Spleen (tissue), 13 donors: ENCODE measurements at regions of chr18 and their contacts with region 1.

Region 1: DNA sequence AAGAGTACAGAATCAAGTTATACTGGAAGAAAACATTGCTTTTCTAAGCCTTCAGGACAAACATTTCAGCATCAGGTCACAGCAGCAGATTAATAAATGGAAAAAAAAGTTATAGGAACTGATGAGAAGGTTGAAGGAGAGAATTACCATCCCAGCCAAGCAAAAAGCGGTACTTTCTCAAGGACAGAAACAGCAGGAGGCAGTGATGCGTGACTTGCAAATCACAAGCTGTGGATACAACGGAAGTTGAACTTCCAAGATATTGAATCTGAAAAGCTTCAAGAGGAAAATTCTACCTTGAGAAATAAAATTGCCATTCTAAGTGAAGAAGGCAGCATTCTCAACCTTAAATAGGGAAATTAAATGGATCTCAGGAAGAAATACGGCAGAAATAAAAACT is 18.5 kb upstream of the SERPINB12 start:
- DNase-seq: no peak
- H3K4me3 ChIP-seq: no peak overlapping the region
- H3K27ac ChIP-seq: no peak overlapping the region
- H3K4me1 ChIP-seq: peaks cover 0 to under 1% (median 0%) of the 10 kb centered on the region in 6 donors
- H3K27me3 ChIP-seq: peaks cover 0 to 5% (median 0%) of the 10 kb centered on the region in 7 donors
- CTCF ChIP-seq: no peak
- POLR2A ChIP-seq: no peak

Region 2: GRCh38 chr18:63476666-63477065 is 47.0 kb before region 1 on chr18 and contains the start of gene SERPINB5:
- intact Hi-C with region 1: no loop called
- DNase-seq: no peak
- H3K4me3 ChIP-seq: no peak within 1 kb of the TSS
- H3K27ac ChIP-seq: no peak within 1 kb of the TSS
- H3K4me1 ChIP-seq: no peaks in the 10 kb centered on the region
- H3K27me3 ChIP-seq: peaks cover 0 to 18% (median 0%) of the 10 kb centered on the region in 7 donors
- CTCF ChIP-seq: no peak
- POLR2A ChIP-seq: no peak
- total RNA-seq, gene SERPINB5: not detected

Region 3: DNA sequence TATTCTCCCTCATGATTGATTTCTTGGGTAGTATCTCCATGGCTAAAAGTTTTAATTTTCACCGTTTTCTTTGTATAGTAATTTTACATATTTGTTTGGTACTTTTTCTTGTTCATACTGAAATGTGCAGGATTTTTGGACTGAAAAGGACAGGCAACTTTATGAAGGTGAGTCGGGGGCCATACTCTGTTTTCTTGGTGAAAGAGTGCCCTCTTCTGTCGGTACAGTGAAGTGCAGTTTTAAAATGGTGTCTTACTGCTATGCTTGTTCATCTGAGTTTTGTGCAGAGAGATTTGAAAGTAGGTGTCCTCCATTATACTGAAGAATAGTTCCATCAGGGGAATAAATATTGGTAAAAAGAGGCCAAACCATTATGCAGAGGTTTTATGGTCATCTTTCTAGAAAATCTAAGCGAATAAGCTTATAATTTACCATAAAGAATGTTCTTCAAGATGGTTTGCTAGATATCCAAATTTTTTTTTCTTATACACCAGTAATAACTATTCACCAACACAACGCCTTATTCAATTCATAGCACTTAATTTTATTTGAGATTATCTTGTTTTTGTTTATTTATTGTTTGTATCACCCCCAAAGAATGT is 54.8 kb after region 1 on chr18:
- intact Hi-C with region 1: loop called (anchors 5 kb)
- DNase-seq: no peak
- H3K4me3 ChIP-seq: no peak overlapping the region
- H3K27ac ChIP-seq: no peak overlapping the region
- H3K4me1 ChIP-seq: peaks cover 0 to 3% (median 0%) of the 10 kb centered on the region in 6 donors
- H3K27me3 ChIP-seq: peaks cover 0 to 4% (median 0%) of the 10 kb centered on the region in 7 donors
- CTCF ChIP-seq: peak in 9 of 11 experiments; percentile 18 to 69 (median 55)
- POLR2A ChIP-seq: no peak

Region 4: DNA sequence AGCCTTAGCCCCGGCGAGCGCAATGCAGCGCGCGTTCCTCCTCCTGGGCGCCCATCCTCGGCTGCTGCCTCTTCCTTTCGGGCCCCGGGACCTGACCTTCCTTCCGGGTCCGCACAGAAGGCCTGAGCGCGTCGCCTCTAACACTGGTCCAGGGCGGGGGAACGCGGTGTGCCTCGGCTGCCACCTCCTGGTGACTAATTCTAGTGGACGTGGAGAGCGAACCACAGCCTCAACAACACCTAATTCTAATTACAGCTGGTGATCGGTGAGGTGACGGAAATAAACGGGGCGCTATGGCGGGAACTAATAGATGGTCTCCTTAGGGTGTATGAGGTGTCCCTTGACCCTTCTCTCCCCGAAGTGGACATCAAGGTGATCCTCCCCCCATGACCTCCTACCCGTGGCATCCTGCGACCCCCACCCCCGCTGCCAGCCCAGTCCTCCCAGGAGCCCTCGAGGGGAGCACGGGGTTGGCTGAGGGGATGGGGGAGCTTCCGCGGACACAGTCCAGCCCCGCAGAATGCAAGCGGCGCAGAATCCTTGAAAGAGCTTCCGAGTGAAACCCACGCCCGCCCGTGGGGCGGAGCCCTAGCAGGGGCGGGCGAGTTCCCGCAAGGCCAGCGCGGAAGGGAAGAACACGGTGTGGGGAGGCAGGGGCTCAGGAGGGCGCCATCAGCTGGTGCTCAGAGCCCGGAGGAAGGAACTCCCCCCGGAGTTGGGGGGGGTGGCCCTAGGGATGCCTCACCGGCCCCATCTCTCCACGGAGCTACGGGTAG is 412.7 kb after region 1 on chr18:
- intact Hi-C with region 1: loop called (anchors 5 kb)
- DNase-seq: peak; percentile 96
- H3K4me3 ChIP-seq: peak overlapping the region; percentile 41 to 77 (median 52)
- H3K27ac ChIP-seq: peak overlapping the region in 4 of 8 donors; percentile 49 to 81 (median 76)
- H3K4me1 ChIP-seq: peaks cover 9 to 20% (median 14%) of the 10 kb centered on the region in 6 donors
- H3K27me3 ChIP-seq: peaks cover 0 to 30% (median 5%) of the 10 kb centered on the region in 7 donors
- CTCF ChIP-seq: peak; percentile 43 to 82 (median 72)
- POLR2A ChIP-seq: no peak

Region 5: DNA sequence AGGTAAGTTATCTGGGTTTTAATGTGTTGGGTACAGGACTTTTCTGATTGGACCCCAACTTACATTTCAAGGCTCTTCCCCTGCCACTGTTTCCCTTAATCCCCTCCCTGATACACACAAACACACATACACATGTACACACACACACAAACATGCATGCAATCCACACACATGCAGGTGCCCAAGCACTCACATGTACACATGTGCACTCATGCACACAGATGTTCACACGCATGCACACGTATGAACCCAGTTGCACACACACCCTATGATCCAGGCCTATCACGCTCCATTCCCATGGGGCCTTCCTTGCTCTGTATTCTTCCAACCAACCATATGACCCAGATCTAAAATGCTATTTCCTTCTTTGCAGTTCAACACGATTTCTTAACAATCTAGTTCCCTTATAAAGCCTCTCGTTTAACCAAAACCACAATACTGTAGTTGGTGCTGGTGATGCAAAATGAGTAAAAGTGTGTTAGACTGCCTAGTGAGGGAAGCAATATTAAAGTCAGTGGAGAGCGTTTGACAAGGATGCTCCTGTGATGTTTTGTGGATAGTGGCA is 457.3 kb after region 1 on chr18:
- intact Hi-C with region 1: loop called (anchors 10 kb)
- DNase-seq: no peak
- H3K4me3 ChIP-seq: no peak overlapping the region
- H3K27ac ChIP-seq: peak overlapping the region in 3 of 8 donors; percentile 11 to 46 (median 38)
- H3K4me1 ChIP-seq: peaks cover 3 to 62% (median 26%) of the 10 kb centered on the region in 6 donors
- H3K27me3 ChIP-seq: no peaks in the 10 kb centered on the region
- CTCF ChIP-seq: no peak
- POLR2A ChIP-seq: no peak